Aorta (tissue), 5 donors: ENCODE measurements at regions of chr3 and their contacts with region 1.

Region 1: DNA sequence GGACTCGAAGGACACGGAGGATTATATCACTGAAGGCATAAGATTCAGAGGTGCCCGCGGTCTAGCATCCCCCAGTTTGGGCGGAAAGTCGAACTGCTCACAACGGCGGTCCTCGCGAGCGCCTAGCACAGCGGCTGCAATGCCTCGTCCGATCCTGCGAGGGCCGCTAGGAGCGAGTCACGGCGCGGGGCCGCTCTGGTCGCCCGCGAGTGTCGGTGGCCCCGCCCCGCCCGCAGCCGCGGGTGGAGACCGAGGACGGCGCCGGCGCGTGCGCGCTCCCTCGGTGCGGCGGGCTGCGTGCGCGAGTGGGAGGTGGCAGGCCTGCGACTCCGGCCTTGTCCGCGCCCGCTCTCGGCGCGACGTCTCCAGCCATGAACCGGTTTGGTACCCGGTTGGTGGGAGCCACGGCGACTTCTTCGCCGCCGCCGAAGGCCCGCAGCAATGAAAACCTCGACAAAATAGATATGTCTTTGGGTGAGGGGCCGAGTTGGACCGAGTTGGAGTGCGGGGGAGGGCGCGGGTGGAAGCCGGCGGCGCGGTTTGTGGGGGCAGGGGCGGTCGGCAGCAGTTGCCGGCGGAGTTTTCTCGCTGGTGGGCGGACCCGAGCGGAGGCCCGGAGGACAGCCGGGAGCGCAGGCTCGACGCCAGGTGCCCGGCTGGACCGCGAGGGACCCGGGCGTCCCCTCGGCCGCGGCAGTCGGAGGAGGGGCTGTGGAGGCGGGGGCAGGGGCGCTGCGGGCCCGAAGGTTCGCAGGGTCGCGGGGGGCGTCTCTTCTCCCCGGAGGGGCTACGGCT is at the start of gene FYTTD1:
- DNase-seq: peak; percentile 95 to 97
- ATAC-seq: peak; percentile 97
- H3K4me3 ChIP-seq: peak within 1 kb of the TSS; percentile 83 to 98
- H3K27ac ChIP-seq: peak within 1 kb of the TSS; percentile 77 to 81
- H3K4me1 ChIP-seq: peaks cover 0 to 3% of the 10 kb centered on the region in 2 donors
- H3K27me3 ChIP-seq: no peaks in the 10 kb centered on the region
- total RNA-seq, gene FYTTD1: 55.0 to 58.6 TPM

Region 2: GRCh38 chr3:197445896-197446711 is 303.7 kb before region 1 on chr3:
- intact Hi-C with region 1: no loop called
- DNase-seq: no peak
- ATAC-seq: no peak
- H3K4me3 ChIP-seq: no peak overlapping the region
- H3K27ac ChIP-seq: no peak overlapping the region
- H3K4me1 ChIP-seq: no peaks in the 10 kb centered on the region
- H3K27me3 ChIP-seq: no peaks in the 10 kb centered on the region

Region 3: GRCh38 chr3:197490098-197490497 is 259.7 kb before region 1 on chr3:
- intact Hi-C with region 1: no loop called
- DNase-seq: no peak
- ATAC-seq: no peak
- H3K4me3 ChIP-seq: no peak overlapping the region
- H3K27ac ChIP-seq: no peak overlapping the region
- H3K4me1 ChIP-seq: no peaks in the 10 kb centered on the region
- H3K27me3 ChIP-seq: no peaks in the 10 kb centered on the region

Region 4: GRCh38 chr3:197711973-197712707 is 37.7 kb before region 1 on chr3:
- intact Hi-C with region 1: loop called in 1 of 2 experiments (anchors 5 kb)
- DNase-seq: peak; percentile 93 to 94
- ATAC-seq: peak; percentile 97
- H3K4me3 ChIP-seq: peak overlapping the region; percentile 61 to 82
- H3K27ac ChIP-seq: peak overlapping the region; percentile 99
- H3K4me1 ChIP-seq: peaks cover 0 to 2% of the 10 kb centered on the region in 2 donors
- H3K27me3 ChIP-seq: no peaks in the 10 kb centered on the region

Region 5: GRCh38 chr3:197791113-197791891 is 41.5 kb after region 1 on chr3 and contains the start of gene LRCH3:
- intact Hi-C with region 1: loop called in 1 of 2 experiments (anchors 5 kb)
- DNase-seq: peak; percentile 89 to 95
- ATAC-seq: peak; percentile 94
- H3K4me3 ChIP-seq: peak within 1 kb of the TSS; percentile 77 to 87
- H3K27ac ChIP-seq: peak within 1 kb of the TSS; percentile 29 to 97
- H3K4me1 ChIP-seq: peaks cover 0 to 5% of the 10 kb centered on the region in 2 donors
- H3K27me3 ChIP-seq: no peaks in the 10 kb centered on the region
- total RNA-seq, gene LRCH3: 76.1 to 104 TPM

Region 6: GRCh38 chr3:197801891-197802778 is 52.3 kb after region 1 on chr3:
- intact Hi-C with region 1: loop called in 1 of 2 experiments (anchors 10 kb)
- DNase-seq: no peak
- ATAC-seq: no peak
- H3K4me3 ChIP-seq: no peak overlapping the region
- H3K27ac ChIP-seq: no peak overlapping the region
- H3K4me1 ChIP-seq: peaks cover 3 to 6% of the 10 kb centered on the region in 2 donors
- H3K27me3 ChIP-seq: no peaks in the 10 kb centered on the region